Gastrocnemius medialis (tissue), 4 donors: ENCODE measurements at regions of chr2 and their contacts with region 1.

Region 1: GRCh38 chr2:129178356-129178755 is 801.1 kb upstream of the RAB6C start:
- DNase-seq: peak; percentile 60 to 72
- ATAC-seq: peak; percentile 94 to 97
- H3K4me3 ChIP-seq: no peak overlapping the region
- H3K27ac ChIP-seq: no peak overlapping the region
- H3K4me1 ChIP-seq: peaks cover 0 to 6% of the 10 kb centered on the region in 2 donors
- H3K27me3 ChIP-seq: no peaks in the 10 kb centered on the region
- CTCF ChIP-seq: no peak
- POLR2A ChIP-seq: no peak

Region 2: GRCh38 chr2:129237966-129238725 is 59.8 kb after region 1 on chr2:
- in situ Hi-C with region 1: no loop called
- intact Hi-C with region 1: loop called (anchors 2 kb)
- DNase-seq: no peak
- ATAC-seq: no peak
- H3K4me3 ChIP-seq: no peak overlapping the region
- H3K27ac ChIP-seq: no peak overlapping the region
- H3K4me1 ChIP-seq: peaks cover 0 to 10% of the 10 kb centered on the region in 2 donors
- H3K27me3 ChIP-seq: no peaks in the 10 kb centered on the region
- CTCF ChIP-seq: no peak
- POLR2A ChIP-seq: no peak